HEK293T (cell line): ENCODE measurements at regions of chr5 and their contacts with region 1.

Region 1: GRCh38 chr5:151651997-151652645 is 34.6 kb downstream of the SPARC start:
- DNase-seq: peak; percentile 85

Region 2: DNA sequence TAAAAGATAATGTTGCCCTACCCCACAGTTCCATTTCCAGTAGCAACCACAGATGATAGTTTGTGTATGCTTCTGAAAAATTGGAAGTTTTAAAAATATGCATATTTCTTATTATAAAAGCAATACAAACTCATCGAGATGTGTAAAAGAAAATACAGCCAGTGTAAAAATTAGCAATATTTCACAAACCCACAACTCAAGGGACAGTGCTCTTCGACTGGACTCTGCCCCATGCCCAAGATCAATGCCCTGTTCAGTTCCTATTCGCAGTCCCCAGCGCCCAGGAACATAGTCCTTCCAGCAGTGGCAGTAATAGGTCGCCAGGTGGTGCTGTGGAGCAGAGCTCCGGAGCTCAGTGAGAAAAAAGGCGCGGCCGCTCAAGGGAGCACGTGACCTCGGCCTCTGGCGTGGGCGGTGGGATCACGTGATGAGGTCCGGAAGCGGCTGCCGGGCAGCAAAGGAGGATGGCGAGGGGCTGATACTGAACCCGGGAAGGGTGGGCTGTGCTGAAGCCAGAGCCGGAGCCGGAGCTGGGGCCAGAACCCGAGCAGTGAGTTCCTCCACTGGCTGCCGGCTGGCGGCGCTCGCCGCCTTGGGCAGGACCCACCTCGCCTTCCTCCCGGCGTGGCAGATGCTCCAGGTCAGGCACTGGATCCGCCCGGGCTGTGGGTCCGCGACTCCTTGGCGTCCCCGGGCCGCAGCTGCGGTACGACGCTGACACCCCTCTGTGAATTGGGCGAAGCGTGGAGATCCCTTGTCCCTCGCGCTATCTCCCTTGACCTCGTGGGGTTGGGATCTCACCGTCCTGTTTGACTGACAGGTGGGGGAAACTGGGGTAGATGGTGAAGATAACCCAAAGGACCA is 204.7 kb before region 1 on chr5 and contains the start of gene SLC36A1:
- CTCF ChIA-PET with region 1: interaction called, 14 read pairs
- POLR2A ChIA-PET with region 1: interaction called, 4 read pairs
- DNase-seq: peak; percentile 94

Region 3: DNA sequence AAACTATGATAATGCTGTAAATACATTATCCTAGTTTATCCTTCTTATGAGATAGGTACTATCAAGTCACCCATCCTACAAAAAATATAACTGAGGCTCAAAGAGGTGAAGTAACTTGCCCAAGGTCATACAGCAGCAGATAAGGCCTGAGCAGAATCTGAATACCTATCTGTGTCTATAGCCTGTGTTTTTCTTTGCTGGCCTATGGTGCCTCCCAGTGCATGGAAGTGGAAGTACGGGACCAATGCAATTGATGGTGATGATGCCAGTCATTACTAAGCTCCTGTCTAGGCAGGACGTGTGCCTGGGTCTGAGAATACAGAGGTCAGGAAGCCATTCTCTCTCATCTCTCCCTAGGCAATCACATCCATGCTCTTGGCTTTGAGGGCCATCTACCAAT is 128.8 kb before region 1 on chr5:
- CTCF ChIA-PET with region 1: interaction called, 24 read pairs
- POLR2A ChIA-PET with region 1: no interaction called
- DNase-seq: peak; percentile 73

Region 4: GRCh38 chr5:151632524-151632923 is 19.6 kb before region 1 on chr5:
- CTCF ChIA-PET with region 1: interaction called, 10 read pairs
- POLR2A ChIA-PET with region 1: no interaction called
- DNase-seq: no peak

Region 5: DNA sequence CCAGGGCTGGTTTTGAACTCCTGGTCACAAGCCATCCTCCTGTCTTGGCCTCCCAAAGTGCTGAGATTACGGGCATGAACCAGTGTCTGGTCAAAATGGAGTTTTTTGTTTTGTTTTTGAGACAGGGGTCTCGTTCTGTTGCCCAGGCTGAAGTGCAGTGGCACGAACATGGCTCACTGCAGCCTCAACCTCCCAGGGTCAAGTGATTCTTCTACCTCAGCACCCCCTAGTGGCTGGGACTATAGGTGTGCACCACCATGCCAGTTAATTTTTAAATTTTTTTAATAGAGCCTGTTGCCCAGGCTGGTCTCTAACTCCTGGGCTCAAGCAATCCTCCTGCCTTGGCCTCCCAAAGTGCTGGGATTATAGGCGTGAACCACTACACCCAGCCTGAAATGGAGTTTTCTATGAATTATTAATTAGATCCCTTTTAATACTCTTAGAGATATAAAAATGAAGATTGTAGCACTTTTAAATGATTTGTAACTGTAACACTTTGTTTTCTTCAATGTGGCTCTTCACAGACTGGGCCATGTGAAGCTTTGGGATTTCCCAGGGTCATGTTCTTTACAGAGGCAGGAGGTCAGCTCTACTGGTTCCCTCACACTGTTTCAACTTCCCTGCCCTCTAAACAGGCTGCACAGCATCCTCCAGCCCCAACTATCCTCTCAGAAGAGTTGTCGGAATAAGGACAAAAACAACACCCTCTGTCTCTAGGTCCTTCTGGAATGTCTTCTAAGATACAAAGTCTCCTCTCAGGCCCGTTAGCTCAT is 67.3 kb after region 1 on chr5:
- CTCF ChIA-PET with region 1: interaction called, 22 read pairs
- POLR2A ChIA-PET with region 1: no interaction called
- DNase-seq: no peak

Region 6: GRCh38 chr5:151740336-151740942 is 88.3 kb after region 1 on chr5:
- CTCF ChIA-PET with region 1: interaction called, 37 read pairs
- POLR2A ChIA-PET with region 1: no interaction called
- DNase-seq: peak; percentile 74